ENCODE measurements at regions of chr1 and their contacts with region 1.

Region 1: GRCh38 chr1:9867408-9868243 is 42.4 kb downstream of the CTNNBIP1 start:
- DNase-seq: peak; percentile 73 to 95 (median 84)
- H3K4me3 ChIP-seq: no peak overlapping the region
- H3K27ac ChIP-seq: peak overlapping the region in 1 of 5 donors; percentile 4
- H3K4me1 ChIP-seq: peaks cover 7% of the 10 kb centered on the region in 2 donors
- H3K27me3 ChIP-seq: no peaks in the 10 kb centered on the region
- CTCF ChIP-seq: peak; percentile 95 to 99 (median 97)
- POLR2A ChIP-seq: no peak

Region 2: DNA sequence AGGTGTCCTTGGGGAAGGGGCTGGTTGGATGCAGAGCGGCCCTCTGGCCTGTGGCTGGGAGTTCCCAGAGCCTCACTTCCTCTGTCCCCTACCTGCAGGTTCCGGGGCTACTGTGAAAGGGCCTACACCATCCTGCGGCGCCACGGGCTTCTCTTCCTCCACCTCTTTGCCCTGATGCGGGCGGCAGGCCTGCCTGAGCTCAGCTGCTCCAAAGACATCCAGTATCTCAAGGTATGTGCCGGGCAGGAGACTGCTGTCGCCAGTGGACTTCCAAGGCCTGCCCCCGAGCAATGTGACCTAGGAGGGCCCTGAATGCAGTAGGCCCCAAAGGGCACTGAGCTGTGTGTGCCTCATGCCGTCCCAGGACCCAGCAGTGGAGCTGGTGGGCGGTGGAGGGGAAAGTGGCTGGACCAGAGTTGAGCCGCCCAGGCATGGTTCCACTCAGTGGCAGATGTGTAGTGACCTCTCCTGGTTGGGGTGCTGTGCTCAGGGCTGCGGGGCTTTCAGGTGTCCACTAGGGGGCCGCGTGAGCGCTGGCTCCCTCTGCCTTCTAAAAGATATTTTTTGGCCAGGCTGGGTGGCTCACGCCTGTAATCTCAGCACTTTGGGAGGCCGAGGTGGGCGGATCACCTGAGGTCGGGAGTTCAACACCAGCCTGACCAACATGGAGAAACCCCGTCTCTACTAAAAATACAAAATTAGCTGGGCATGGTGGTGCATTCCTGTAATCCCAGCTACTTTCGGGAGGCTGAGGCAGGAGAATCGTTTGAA is 142.7 kb before region 1 on chr1:
- intact Hi-C with region 1: loop called in 1 of 2 experiments (anchors 10 kb)
- DNase-seq: peak in 6 of 7 donors; percentile 41 to 76 (median 66)
- H3K4me3 ChIP-seq: no peak overlapping the region
- H3K27ac ChIP-seq: no peak overlapping the region
- H3K4me1 ChIP-seq: no peaks in the 10 kb centered on the region
- H3K27me3 ChIP-seq: no peaks in the 10 kb centered on the region
- CTCF ChIP-seq: peak; percentile 59 to 76 (median 70)
- POLR2A ChIP-seq: no peak

Region 3: GRCh38 chr1:9784508-9785133 is 83.0 kb before region 1 on chr1:
- intact Hi-C with region 1: loop called (anchors 5 kb)
- DNase-seq: peak; percentile 39 to 80 (median 57)
- H3K4me3 ChIP-seq: no peak overlapping the region
- H3K27ac ChIP-seq: no peak overlapping the region
- H3K4me1 ChIP-seq: no peaks in the 10 kb centered on the region
- H3K27me3 ChIP-seq: no peaks in the 10 kb centered on the region
- CTCF ChIP-seq: peak; percentile 58 to 77 (median 73)
- POLR2A ChIP-seq: no peak

Measured in adrenal gland (tissue), 19 donors.